ENCODE measurements at regions of chr4 and their contacts with region 1.

Region 1: DNA sequence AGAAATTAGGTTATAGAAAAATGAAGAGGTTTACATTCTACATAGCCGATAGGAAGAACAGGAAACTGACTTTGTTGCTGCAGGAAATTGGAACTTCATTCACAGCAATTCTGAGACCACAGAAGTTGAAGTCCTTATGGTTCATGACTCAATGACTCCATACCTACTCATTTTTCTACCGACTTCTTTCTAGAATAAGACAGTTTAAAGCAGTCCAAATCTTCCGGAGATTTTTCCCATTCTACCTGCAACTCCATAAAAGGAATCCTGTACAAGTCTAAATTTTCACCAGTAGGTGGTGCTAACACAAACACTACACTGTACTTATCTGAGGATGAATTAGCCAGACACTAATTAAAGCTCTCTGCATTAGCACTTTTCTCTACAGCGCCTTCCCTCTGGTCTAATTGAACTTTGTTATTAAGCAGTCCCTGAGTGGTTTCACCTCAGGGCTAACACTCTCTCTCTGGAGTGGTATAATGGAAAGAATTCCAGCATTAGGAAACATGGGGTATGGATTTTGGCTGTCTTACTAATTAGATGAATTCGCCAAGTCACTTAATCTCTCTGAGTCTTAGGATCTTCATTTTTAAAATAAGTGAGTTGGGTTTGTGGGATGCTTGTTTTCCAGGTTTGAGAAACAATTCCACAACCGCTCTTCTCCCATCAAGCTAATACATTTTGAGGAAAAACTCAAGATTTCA is 167.9 kb downstream of the SMIM20 start:
- DNase-seq: no peak
- H3K4me3 ChIP-seq: no peak overlapping the region
- H3K27ac ChIP-seq: no peak overlapping the region
- H3K4me1 ChIP-seq: peaks cover 0 to 16% of the 10 kb centered on the region in 2 donors
- H3K27me3 ChIP-seq: peaks cover 6% of the 10 kb centered on the region
- CTCF ChIP-seq: peak; percentile 48 to 70 (median 62)
- POLR2A ChIP-seq: no peak

Region 2: GRCh38 chr4:25842229-25842845 is 239.6 kb before region 1 on chr4:
- intact Hi-C with region 1: no loop called
- DNase-seq: no peak
- H3K4me3 ChIP-seq: no peak overlapping the region
- H3K27ac ChIP-seq: no peak overlapping the region
- H3K4me1 ChIP-seq: no peaks in the 10 kb centered on the region
- H3K27me3 ChIP-seq: no peaks in the 10 kb centered on the region
- CTCF ChIP-seq: no peak
- POLR2A ChIP-seq: no peak

Region 3: DNA sequence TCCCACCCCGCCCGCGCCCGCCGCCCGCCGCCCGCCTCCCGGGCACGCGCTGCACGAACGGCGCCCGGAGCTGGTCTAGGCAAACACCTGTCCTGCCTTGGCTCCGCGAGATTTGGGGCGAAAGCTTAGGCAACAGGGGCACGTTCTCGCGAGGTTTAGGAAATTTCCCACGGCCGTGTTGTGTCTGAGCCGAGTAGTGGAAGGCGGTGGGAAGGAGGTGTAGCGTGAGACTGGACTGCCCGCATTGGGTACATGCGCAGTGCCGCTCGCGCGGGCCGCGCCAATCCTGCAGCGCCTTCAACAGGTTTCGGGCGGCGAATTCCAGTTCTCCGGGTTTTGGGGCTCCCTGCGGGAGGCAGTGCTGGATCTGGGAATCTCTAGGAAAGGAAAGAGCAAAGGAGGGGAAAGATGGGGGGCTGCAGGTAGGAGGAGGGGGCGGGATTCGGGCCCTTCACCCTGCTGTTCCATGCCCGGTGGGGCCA is 237.6 kb after region 1 on chr4:
- intact Hi-C with region 1: loop called in 1 of 2 experiments (anchors 10 kb)
- DNase-seq: peak; percentile 99 to 100 (median 99)
- H3K4me3 ChIP-seq: peak overlapping the region; percentile 32 to 84 (median 81)
- H3K27ac ChIP-seq: peak overlapping the region; percentile 65 to 96 (median 94)
- H3K4me1 ChIP-seq: peaks cover 7 to 29% of the 10 kb centered on the region in 2 donors
- H3K27me3 ChIP-seq: no peaks in the 10 kb centered on the region
- CTCF ChIP-seq: peak in 1 of 6 experiments; percentile 21
- POLR2A ChIP-seq: peak; percentile 50 to 68

Region 4: DNA sequence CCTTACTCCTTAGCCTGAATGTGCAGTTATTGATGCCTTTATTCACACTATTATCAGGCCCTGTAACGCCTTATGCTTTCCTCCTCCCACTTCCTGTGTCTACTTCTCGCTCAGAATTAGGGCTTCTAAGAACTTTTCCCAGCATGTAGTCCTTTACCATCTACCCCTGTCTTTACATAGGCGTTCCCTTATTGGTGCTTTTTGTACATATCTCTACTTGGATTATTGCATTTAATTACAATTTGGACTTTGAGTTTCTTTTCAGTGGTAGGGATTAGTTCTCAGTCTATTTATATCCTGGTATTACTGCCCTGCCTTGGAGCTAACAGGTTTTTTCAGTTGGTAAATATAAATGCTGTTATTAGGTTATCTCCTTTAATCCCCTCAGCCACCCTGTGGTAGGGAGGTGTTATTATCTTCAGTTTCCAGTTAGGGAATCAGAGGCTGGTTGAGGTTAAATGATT is 322.8 kb after region 1 on chr4:
- intact Hi-C with region 1: loop called in 1 of 2 experiments (anchors 10 kb)
- DNase-seq: no peak
- H3K4me3 ChIP-seq: no peak overlapping the region
- H3K27ac ChIP-seq: no peak overlapping the region
- H3K4me1 ChIP-seq: no peaks in the 10 kb centered on the region
- H3K27me3 ChIP-seq: no peaks in the 10 kb centered on the region
- CTCF ChIP-seq: no peak
- POLR2A ChIP-seq: no peak

Measured in adrenal gland (tissue), 19 donors.